Activated CD4-positive, alpha-beta T cell treated with anti-CD3 and anti-CD28 coated beads for 36 hours (primary cell): ENCODE measurements at regions of chr1 and their contacts with region 1.

Region 1: DNA sequence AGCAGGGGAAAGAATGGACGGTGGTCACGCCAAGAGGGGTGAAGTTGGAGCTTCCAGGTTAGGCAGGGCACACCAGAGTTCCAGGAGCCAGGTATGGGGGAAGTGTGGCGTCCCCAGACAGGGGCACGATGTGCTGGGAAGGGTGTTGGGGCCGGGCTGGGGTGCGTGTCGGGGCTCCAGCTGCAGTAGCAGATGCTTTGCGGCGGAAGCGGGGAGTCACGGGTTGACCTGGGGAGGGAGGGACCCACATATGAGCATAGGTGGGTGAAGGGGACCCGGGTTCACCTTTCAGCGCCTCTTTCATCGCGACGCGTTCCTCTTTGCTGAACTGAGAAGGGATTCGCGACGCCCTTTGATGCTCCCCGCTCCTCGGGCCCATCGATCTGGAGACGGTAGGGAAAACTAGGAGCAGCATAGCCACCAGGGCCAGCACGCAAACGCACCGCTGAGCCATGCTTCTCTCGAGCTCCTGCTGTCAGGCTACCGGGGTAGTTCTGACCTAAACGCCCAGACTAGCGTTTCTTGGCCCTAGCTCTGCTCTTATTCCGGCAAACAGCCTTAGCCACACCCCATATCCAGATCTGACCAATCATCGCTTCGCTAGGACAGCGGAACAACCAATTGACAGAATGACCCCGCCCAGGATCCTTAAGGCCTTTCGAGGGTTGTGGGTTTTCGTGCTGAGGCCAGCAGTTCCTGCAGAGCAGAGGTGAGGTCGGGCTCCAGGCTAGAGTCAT is at the start of gene PM20D1:
- DNase-seq: peak; percentile 89
- ATAC-seq: peak; percentile 98
- H3K4me3 Mint-ChIP-seq: peak within 1 kb of the TSS; percentile 83
- H3K27ac Mint-ChIP-seq: peak within 1 kb of the TSS; percentile 86
- H3K4me1 Mint-ChIP-seq: peaks cover 28% of the 10 kb centered on the region
- H3K27me3 Mint-ChIP-seq: no peaks in the 10 kb centered on the region
- total RNA-seq, gene PM20D1: 0.34 to 0.58 TPM

Region 2: DNA sequence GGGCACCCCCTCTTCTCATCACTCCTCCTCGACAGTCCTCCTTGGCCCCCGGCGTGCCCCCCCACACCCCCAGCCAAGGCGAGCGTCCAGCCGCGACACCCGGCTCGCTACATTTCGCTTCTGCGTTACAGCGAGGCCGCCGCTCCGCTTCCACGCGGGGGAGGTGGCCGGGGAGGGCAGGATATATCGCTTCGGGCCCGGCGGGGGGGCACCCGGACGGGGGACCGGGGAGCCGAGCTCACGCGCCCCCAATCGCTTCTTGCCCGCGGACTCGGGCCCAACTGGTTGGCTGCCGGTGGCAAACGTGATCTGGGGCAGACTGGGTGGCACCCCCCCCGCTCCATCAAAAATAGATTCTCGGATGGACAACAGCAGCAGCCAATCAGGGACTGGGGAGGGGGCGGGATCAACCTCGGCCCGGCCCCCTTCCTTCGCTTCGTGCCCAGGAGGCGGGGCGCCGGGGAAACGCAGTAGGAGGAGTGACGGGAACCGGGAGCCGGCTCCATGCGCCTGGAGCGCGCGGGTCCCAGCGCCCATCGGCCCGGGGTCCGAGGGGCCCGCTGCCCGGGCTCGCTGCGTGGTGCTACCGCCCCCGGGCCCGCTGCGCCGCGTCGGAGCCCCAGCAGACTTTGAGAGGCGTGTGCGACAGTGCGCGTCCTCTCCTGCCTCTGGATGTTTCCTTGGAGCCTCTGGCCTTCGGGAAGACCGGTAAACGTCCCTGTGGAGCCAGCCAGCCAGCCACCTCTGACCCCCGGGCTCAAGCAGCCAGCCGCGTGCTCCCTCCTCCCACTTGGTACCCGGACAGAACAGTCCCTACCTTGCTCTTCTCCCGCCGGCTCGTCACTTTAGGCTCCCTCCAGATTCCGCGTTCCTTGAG is 36.7 kb before region 1 on chr1 and contains the start of gene SLC41A1:
- CTCF ChIA-PET with region 1: interaction called, 3 read pairs
- POLR2A ChIA-PET with region 1: no interaction called
- intact Hi-C with region 1: loop called in 1 of 2 experiments (anchors 1 kb)
- DNase-seq: peak; percentile 94
- ATAC-seq: peak; percentile 96
- H3K4me3 Mint-ChIP-seq: peak within 1 kb of the TSS; percentile 81
- H3K27ac Mint-ChIP-seq: peak within 1 kb of the TSS; percentile 84
- H3K4me1 Mint-ChIP-seq: peaks cover 47% of the 10 kb centered on the region
- H3K27me3 Mint-ChIP-seq: no peaks in the 10 kb centered on the region
- total RNA-seq, gene SLC41A1: 34.4 to 41.5 TPM